ENCODE measurements at regions of chr2 and their contacts with region 1.

Region 1: GRCh38 chr2:237072067-237072931 is 13.4 kb upstream of the COPS8 start:
- DNase-seq: peak; percentile 68

Region 2: DNA sequence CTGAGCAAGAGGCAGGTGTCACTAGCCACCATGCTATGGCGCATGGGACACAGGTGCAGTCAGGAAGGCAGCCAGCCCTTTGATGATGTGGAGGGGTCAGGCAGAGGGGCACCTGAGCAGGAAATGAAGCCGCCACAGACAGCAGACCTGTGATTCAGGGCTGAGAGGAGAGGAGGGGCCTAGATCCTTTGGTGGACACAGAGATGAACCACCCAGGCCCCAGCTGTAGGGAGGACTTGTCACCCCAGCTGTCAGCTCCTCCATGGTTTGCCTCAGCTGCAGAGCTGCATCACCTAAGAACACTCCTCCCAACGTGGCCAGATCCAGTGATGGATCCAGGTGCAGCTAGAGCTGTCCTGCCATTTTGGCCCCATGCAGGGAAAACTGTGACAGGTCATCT is 819.7 kb before region 1 on chr2:
- in situ Hi-C with region 1: no loop called
- DNase-seq: no peak

Region 3: DNA sequence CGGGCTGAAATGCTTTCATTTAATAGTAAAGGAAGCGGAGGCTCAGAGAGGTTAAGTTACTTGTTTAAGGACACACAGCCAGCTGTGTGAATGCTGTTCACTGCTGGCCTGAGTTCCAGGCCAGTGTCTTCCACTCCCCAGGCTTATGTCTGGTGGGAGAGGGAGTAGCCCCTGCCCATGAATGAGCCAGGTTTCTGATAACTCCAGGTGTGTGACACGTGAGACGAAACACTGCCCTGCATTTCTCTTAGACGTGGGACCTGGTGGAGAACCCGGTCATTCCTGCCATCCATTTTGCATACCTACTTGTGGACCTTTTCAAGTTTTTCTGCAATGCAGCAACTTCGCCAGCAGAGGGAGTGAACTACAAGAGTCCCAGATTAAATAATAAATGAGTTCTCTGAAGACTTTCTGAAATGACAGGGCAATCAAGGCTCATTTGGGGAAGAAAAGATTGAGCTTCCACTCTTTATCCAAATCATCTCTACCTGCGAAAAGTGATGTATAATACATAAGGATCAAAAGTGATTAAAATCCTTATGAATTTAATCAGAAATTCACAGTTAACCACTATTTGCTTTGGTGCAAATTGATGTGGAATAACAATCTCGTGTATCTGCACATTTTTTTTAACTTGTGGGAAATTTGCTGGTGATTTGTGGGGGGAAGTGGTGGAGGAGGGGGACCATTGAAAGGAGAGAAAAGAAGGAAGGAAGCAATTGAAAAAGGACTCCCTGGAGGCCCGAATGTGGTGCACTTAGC is 728.7 kb before region 1 on chr2:
- in situ Hi-C with region 1: loop called (anchors 25 kb)
- DNase-seq: peak; percentile 68

Region 4: DNA sequence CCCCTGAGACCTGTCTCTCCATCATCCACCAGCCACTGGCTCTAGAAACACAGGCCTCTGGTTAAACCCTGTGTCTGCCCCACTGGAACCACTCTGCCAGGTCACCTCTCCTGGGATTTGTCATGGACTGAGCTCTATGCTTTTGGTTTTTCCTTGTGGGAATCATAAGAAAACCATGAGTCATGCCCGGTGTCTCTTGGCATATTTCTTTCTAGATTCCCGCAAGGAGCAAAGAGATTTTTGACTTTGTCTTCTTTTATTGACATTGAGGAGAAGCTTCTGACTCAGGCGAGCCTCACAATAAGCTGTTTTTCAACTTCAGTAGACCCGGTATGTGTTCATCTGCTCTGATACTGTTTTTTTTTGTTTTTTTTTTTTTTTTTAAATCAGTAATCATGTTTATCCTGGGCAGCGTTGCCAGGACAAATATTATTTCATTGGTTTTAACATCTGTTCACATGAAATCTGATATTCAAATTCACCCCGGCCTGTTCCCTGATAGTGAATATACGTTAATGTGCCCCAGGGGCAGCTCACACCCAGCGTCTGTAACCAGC is 295.5 kb before region 1 on chr2:
- in situ Hi-C with region 1: no loop called
- DNase-seq: no peak

Region 5: DNA sequence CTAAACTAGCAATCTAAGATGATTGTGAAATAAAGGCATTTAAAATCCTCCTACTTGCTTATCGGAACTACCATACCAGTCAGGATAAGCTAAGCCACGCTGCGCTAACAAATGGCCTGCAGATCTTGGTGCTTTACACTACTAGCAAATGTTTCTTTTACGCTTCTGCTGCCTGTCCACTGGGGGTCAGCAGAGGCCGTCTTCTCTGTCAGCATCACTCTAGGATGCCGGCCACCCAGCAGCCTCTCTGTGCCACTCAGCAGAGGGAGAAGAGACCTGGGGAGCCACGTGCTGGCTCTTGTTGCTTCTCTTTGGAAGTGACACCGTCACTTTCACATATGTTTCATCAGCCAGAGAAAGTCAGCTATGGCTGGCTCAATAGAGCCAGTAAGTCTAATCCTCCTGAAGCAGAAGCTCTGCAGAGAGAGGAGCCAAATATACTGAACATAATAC is 49.9 kb after region 1 on chr2:
- in situ Hi-C with region 1: no loop called
- DNase-seq: peak; percentile 28

Region 6: GRCh38 chr2:237244976-237245646 is 172.8 kb after region 1 on chr2:
- in situ Hi-C with region 1: no loop called
- DNase-seq: no peak